PC-9 (cell line): ENCODE measurements at regions of chr2 and their contacts with region 1.

Region 1: GRCh38 chr2:101252408-101253012 is at the start of gene CNOT11:
- DNase-seq: peak; percentile 91 to 97
- H3K4me3 ChIP-seq: peak within 1 kb of the TSS; percentile 66
- H3K27ac ChIP-seq: peak within 1 kb of the TSS; percentile 71
- H3K4me1 ChIP-seq: peaks cover 33% of the 10 kb centered on the region
- H3K27me3 ChIP-seq: no peaks in the 10 kb centered on the region
- CTCF ChIP-seq: no peak
- total RNA-seq, gene CNOT11: 39.0 and 60.6 TPM in 2 replicates

Region 2: DNA sequence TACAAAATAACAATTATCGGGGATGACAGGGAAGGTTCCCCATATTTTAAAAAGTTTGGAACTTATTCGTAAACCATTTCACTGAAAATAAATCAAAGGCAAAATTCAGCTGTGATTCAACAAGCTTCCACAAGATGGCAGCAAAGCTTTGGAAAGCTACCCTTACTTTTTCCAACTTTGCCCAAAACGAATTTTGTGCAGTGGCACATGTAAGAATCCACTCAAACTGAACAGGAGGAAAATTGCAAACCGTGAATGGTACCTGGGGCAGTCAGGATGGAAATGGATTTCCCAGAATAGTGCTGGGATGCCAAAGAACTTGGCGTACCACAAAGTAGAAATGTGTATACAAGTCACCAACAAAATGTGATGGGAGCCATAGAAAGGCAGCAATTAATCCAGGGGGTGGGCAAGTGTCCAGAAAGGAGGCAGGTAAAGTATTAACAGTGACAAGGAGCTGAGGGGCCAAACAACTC is 239.8 kb before region 1 on chr2:
- CTCF ChIA-PET with region 1: interaction called, 3 read pairs
- POLR2A ChIA-PET with region 1: interaction called, 3 read pairs
- intact Hi-C with region 1: loop called (anchors 2 kb)
- DNase-seq: peak; percentile 19 to 39
- H3K4me3 ChIP-seq: no peak overlapping the region
- H3K27ac ChIP-seq: no peak overlapping the region; the same call in 1 of the 2 replicates
- H3K4me1 ChIP-seq: no peaks in the 10 kb centered on the region
- H3K27me3 ChIP-seq: no peaks in the 10 kb centered on the region
- CTCF ChIP-seq: peak; percentile 91

Region 3: DNA sequence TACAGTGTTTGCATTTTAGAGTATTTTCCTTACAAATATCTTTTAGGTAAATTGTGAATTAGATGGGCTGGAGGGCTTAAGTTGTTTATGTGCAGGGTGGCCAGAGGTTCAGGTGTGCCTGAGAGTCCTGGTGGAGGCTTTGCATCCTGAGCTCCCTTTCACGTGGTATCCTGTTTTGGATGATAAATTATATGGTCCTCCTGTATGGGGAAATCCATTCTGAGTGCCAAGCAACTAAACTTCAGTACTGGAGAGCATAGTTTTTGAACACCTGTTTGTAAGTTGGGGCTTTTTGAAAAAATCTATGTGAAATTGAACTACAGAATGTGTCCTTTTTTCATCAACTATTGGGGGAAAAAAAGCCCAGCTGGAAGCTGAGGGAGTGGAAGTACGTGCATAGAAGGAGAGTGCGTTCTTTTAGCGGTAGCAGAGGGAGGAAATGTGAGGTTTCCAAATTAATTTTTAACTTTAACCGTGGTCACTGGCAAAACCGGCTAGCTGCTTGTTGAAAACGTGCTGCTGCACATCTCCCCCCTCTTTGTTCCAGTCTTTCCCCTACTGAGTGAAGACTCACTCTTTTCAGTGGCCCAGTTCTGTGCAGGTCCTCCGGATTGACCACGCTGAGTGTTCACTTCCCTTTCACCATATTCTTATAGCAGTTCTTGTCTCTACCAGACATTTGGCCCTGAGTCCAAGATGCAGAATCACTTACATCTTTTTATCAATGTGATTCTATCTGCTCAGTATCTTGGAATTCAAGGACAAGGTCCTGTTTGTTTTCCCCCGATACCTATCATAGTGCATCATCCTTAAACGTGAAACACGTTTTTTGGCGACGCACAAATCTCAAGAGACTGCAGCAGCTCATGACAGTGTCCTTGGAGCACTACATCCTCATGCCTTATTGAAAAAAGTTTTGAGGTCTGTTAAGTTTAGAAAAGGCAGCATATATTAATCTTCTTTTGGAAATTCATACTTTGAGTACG is 15.5 kb after region 1 on chr2:
- CTCF ChIA-PET with region 1: interaction called, 3 read pairs
- POLR2A ChIA-PET with region 1: interaction called, 10 read pairs
- intact Hi-C with region 1: no loop called
- DNase-seq: no peak
- H3K4me3 ChIP-seq: no peak overlapping the region
- H3K27ac ChIP-seq: no peak overlapping the region
- H3K4me1 ChIP-seq: peaks cover 14% of the 10 kb centered on the region
- H3K27me3 ChIP-seq: no peaks in the 10 kb centered on the region
- CTCF ChIP-seq: no peak

Region 4: GRCh38 chr2:101983928-101984327 is 731.4 kb after region 1 on chr2:
- CTCF ChIA-PET with region 1: no interaction called
- POLR2A ChIA-PET with region 1: no interaction called
- intact Hi-C with region 1: no loop called
- DNase-seq: no peak
- H3K4me3 ChIP-seq: peak overlapping the region; percentile 6; the same call in 1 of the 2 replicates
- H3K27ac ChIP-seq: peak overlapping the region; percentile 93
- H3K4me1 ChIP-seq: peaks cover 60% of the 10 kb centered on the region
- H3K27me3 ChIP-seq: no peaks in the 10 kb centered on the region
- CTCF ChIP-seq: peak; percentile 48